ENCODE measurements at regions of chr12 and their contacts with region 1.

Region 1: GRCh38 chr12:57005980-57006808 is at the start of gene ZBTB39:
- DNase-seq: peak; percentile 60 to 82
- ATAC-seq: peak; percentile 67 to 76
- H3K4me3 ChIP-seq: peak within 1 kb of the TSS; percentile 99
- H3K27ac ChIP-seq: peak within 1 kb of the TSS; percentile 98 to 99
- H3K4me1 ChIP-seq: peaks cover 39% of the 10 kb centered on the region
- CTCF ChIP-seq: peak; percentile 97
- EP300 ChIP-seq: no peak
- POLR2A ChIP-seq: peak; percentile 83
- RAD21 ChIP-seq: no peak; a peak in 1 of 5 replicates
- polyA plus RNA-seq, gene ZBTB39: 9.5 and 9.8 TPM in 2 replicates

Region 2: GRCh38 chr12:56763753-56764657 is 242.2 kb before region 1 on chr12:
- CTCF ChIA-PET with region 1: interaction called, 61 read pairs
- POLR2A ChIA-PET with region 1: interaction called, 7 read pairs
- DNase-seq: peak in 1 of 2 experiments; percentile 54
- ATAC-seq: peak; percentile 22 to 66; a peak in 3 of 6 replicates
- H3K4me3 ChIP-seq: no peak overlapping the region
- H3K27ac ChIP-seq: no peak overlapping the region
- H3K4me1 ChIP-seq: peaks cover 12% of the 10 kb centered on the region; the same call in 1 of the 3 replicates
- CTCF ChIP-seq: no peak
- EP300 ChIP-seq: no peak
- POLR2A ChIP-seq: no peak
- RAD21 ChIP-seq: no peak

Region 3: GRCh38 chr12:57019983-57020719 is 14.0 kb after region 1 on chr12:
- CTCF ChIA-PET with region 1: interaction called, 34 read pairs
- POLR2A ChIA-PET with region 1: no interaction called
- DNase-seq: no peak
- ATAC-seq: no peak
- H3K4me3 ChIP-seq: no peak overlapping the region
- H3K27ac ChIP-seq: no peak overlapping the region
- H3K4me1 ChIP-seq: no peaks in the 10 kb centered on the region
- CTCF ChIP-seq: no peak
- EP300 ChIP-seq: no peak
- POLR2A ChIP-seq: no peak
- RAD21 ChIP-seq: no peak

Region 4: DNA sequence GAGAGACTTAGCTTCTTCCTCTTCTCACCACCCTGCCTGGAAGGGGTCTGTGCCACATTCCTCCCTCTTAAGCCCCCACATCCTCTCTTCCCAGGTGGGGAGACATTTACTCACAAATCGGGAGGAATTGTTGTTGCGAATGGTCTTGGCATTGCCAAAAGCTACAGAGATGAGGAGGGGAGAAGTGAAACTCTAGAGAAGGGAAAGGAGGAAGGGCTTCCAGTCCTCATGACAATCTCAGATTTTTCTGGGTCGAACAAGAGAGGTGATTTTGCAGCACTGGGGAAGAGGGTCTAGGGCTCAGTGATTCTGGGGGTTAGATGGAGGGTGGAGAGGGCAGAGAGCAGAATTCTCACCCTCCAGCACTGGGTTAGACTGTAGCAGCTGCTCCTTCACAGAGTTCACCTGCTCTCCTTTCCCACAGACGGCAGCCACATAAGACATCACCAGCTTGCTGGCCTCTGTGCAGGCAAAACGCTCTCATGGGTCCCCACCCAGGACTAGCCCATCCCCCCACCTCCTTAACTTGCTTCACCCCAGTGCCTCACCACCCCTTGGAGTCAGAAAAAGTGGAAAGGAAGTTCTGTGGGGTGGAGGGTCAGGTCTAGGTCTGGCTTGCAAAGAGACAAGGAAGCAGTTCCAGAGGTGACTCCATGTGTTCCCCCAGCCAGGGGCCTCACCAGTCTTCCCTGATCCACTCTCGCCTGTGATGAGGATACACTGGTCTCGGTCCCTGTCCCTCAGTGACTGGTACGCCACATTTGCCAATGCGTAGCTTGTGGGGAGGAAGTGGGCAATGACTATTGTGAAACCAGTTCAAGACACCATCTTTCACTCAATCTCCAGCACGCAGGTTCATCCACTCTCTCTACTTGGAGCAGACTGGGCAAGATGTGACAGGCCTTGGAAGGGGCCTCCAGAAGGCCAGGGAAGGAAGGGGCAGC is 41.0 kb after region 1 on chr12:
- CTCF ChIA-PET with region 1: interaction called, 10 read pairs
- POLR2A ChIA-PET with region 1: no interaction called
- DNase-seq: no peak
- ATAC-seq: no peak
- H3K4me3 ChIP-seq: no peak overlapping the region
- H3K27ac ChIP-seq: no peak overlapping the region
- H3K4me1 ChIP-seq: peaks cover 23% of the 10 kb centered on the region; the same call in 2 of the 3 replicates
- CTCF ChIP-seq: no peak
- EP300 ChIP-seq: no peak
- POLR2A ChIP-seq: no peak
- RAD21 ChIP-seq: no peak

Region 5: GRCh38 chr12:57175428-57176138 is 169.4 kb after region 1 on chr12:
- CTCF ChIA-PET with region 1: interaction called, 11 read pairs
- POLR2A ChIA-PET with region 1: no interaction called
- DNase-seq: peak; percentile 79 to 88
- ATAC-seq: peak; percentile 67 to 90
- H3K4me3 ChIP-seq: no peak overlapping the region
- H3K27ac ChIP-seq: peak overlapping the region; percentile 28 to 64; a peak in 3 of 6 replicates
- H3K4me1 ChIP-seq: peaks cover 16% of the 10 kb centered on the region; the same call in 2 of the 3 replicates
- CTCF ChIP-seq: peak; percentile 83
- EP300 ChIP-seq: no peak
- POLR2A ChIP-seq: no peak
- RAD21 ChIP-seq: peak; percentile 72 to 75